ENCODE measurements at regions of chr14 and their contacts with region 1.

Region 1: DNA sequence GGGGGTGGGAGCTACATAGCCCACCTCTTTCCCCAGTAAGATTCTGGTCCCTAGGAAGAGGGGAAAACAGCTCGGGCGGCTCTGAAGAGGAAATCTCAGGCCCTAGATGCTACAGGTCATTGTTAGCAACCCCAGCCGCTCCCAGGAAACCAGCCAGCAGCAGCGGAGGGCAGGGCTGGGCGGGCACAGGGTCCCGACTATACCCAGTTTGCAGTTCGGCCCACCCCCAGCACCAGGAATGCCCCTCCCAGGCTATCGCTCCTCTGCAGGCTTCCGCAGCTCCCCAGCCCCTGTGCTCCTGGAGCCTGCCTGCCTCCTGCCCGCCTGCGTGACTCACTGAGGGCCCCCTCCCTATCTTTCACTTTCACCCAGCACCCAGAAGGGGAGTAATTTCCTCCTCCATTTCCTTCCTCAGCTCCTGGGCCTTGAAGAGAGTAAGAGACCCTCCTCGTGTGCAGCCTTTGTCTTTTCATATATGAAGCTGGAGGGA is 27.2 kb upstream of the PNMA1 start:
- DNase-seq: peak; percentile 85
- H3K4me3 Mint-ChIP-seq: peak overlapping the region; percentile 43
- H3K27ac Mint-ChIP-seq: peak overlapping the region; percentile 89
- H3K4me1 Mint-ChIP-seq: peaks cover 64% of the 10 kb centered on the region
- H3K27me3 Mint-ChIP-seq: no peaks in the 10 kb centered on the region

Region 2: DNA sequence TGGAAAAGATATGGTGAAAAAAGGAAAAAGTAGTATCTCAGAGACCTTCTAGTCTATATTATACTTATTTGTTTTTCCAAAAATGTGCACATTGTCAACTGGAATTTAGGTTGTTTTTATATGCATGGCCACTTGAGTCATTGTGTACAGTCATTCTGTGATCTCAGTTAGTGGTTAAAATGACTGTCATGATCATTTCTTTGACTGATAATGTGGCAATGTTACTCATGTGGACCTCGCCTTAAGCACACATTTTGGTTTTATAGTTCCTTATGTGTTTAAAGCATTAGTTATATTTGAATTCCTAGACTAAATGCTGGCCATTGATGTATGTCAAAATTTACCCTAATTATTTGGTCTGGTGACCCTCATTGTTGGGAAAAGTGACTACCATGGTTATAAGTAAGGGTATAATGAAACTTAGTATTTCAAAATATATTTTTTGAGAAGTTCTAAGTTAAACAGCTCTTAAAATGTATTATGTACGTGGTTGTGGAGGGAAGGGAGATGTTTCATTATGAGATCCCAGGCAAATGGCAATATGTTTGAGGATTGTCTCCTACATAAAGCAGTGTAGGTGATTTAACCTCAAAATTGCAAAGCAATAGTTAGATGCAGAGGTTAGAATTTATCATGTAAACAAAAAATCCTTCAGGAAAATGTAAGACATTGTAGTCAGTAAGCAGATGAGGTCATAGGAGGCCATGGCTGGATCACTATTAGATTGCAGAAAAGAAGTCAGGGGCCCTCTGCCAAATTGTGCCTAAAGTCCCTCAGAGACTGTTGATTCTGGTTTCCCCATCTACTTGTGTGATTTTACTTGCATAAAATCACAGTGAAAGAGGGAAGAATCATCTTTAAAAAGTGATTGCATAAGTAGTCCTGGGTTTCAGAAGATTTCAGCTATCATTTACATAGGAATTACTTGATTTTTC is 44.7 kb before region 1 on chr14:
- CTCF ChIA-PET with region 1: no interaction called
- POLR2A ChIA-PET with region 1: no interaction called
- intact Hi-C with region 1: loop called (anchors 1 kb)
- DNase-seq: no peak
- H3K4me3 Mint-ChIP-seq: peak overlapping the region; percentile 55
- H3K27ac Mint-ChIP-seq: peak overlapping the region; percentile 86
- H3K4me1 Mint-ChIP-seq: peaks cover 38% of the 10 kb centered on the region
- H3K27me3 Mint-ChIP-seq: no peaks in the 10 kb centered on the region

Region 3: GRCh38 chr14:73785873-73786695 is 44.7 kb after region 1 on chr14:
- CTCF ChIA-PET with region 1: interaction called, 6 read pairs
- POLR2A ChIA-PET with region 1: interaction called, 16 read pairs
- intact Hi-C with region 1: no loop called
- DNase-seq: peak; percentile 80
- H3K4me3 Mint-ChIP-seq: peak overlapping the region; percentile 90
- H3K27ac Mint-ChIP-seq: peak overlapping the region; percentile 93
- H3K4me1 Mint-ChIP-seq: peaks cover 56% of the 10 kb centered on the region
- H3K27me3 Mint-ChIP-seq: no peaks in the 10 kb centered on the region

Measured in activated CD4-positive, alpha-beta memory T cell treated with anti-CD3 and anti-CD28 coated beads for 36 hours (primary cell).